ENCODE measurements at regions of chr17 and their contacts with region 1.

Region 1: DNA sequence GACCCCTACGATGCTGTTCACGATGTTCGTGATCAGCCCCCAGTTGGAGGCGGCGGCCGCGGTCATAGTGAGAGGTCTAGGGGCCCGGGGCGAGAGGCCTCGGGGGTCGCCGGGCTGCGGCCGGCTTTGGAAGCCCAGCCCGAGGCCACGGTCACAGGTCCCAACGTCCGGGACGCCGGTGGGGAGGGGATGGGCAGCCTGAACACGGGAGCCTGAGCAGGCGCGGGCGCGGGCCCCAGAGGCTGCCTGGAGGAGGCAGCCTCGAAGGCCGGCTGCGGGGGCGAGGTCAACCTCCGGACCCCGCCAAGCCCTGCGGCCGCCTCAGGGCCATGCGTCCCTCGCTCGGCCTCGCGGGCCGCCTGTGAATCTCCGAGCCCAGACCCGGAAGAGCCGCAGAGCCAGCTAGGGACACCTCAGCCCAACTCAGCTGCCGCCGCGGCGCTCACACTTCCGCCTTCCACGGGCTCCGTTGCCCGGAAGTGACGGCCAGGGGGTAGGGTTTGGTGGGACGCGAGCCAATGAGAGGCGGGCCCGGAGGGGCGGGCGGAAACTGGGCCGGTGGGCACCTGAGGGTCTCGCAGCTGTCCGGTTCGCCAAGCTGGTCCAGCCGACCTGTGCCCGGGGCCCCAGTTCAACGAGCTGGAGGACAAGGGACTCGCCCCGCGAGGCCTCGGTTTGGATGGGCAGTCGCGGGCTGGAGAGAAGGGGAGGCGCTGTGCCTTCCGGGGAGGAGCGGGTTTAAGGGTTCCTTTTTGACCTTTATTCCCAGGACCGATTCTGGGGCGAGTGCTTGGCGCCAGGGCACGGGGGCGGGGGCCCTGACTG is at the start of gene SLC38A10:
- DNase-seq: peak; percentile 87 to 93 (median 89)
- H3K4me3 ChIP-seq: peak within 1 kb of the TSS; percentile 68 to 75
- H3K4me3 Mint-ChIP-seq: peak within 1 kb of the TSS; percentile 93 to 98 (median 96)
- H3K27ac ChIP-seq: peak within 1 kb of the TSS; percentile 97
- H3K27ac Mint-ChIP-seq: peak within 1 kb of the TSS; percentile 96 to 99 (median 98)
- H3K4me1 ChIP-seq: peaks cover 45% of the 10 kb centered on the region
- H3K4me1 Mint-ChIP-seq: peaks cover 17 to 56% (median 39%) of the 10 kb centered on the region in 4 donors
- H3K27me3 ChIP-seq: no peaks in the 10 kb centered on the region
- H3K27me3 Mint-ChIP-seq: no peaks in the 10 kb centered on the region
- total RNA-seq, gene SLC38A10: 112 to 113 TPM

Region 2: DNA sequence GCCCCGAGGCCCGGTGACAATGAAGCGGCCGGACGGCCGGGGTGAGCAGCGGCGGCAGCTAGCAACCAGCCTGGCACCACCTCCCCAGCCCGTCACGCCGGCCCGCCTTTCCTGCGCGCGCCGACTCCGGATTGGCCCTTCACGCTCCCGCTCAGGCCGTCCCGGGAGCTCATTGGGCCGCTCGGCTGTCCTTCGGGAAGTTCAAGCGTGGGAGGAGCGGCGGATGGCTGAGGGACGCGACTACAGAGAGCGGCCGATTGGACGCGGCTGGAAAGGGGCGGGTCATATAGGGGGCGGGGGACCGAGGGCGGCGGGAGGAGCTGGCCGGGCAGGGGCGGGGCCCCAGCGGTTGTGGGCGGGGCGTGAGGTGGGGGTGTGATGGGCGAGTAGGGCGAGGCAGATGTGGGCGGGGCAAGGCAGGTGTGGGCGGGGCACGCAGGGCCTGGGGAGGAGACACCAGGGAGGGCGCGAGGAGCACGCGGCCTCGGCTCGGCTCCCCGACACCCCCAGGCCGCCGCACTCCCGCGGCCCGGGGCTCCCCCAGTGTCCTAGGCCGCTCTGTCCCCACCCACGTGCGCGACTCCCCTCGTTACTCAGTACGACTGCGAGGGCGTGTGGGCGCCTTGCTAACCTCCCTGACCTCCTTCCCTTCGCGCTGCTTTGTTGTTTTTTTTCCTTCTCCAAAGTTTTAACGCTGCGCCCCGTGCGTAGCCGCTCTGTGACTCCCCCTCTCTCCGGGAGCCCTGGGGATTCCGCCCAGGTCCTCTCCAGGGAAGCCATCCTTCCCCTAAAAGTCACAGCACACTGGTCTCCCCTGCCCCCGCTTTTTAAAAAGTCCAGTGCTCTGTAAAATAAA is 71.9 kb before region 1 on chr17 and contains the start of gene CEP131:
- CTCF ChIA-PET with region 1: no interaction called
- POLR2A ChIA-PET with region 1: interaction called, 5 read pairs
- intact Hi-C with region 1: loop called (anchors 1 kb)
- DNase-seq: peak; percentile 98 to 99 (median 98)
- H3K4me3 ChIP-seq: peak within 1 kb of the TSS in 1 of 2 donors; percentile 50
- H3K4me3 Mint-ChIP-seq: peak within 1 kb of the TSS; percentile 73 to 85 (median 79)
- H3K27ac ChIP-seq: peak within 1 kb of the TSS; percentile 54
- H3K27ac Mint-ChIP-seq: peak within 1 kb of the TSS in 5 of 7 donors; percentile 22 to 81 (median 75)
- H3K4me1 ChIP-seq: peaks cover 18% of the 10 kb centered on the region
- H3K4me1 Mint-ChIP-seq: peaks cover 0 to 22% (median 17%) of the 10 kb centered on the region in 4 donors
- H3K27me3 ChIP-seq: no peaks in the 10 kb centered on the region
- H3K27me3 Mint-ChIP-seq: no peaks in the 10 kb centered on the region
- total RNA-seq, gene CEP131: 9.6 to 10.5 TPM

Region 3: GRCh38 chr17:81238817-81239600 is 56.1 kb before region 1 on chr17 and contains the starts of genes NDUFAF8 and TEPSIN:
- CTCF ChIA-PET with region 1: interaction called, 3 read pairs
- POLR2A ChIA-PET with region 1: interaction called, 17 read pairs
- intact Hi-C with region 1: loop called (anchors 5 kb)
- DNase-seq: peak; percentile 95 to 99 (median 98)
- H3K4me3 ChIP-seq: peak within 1 kb of the TSS; percentile 76 to 89
- H3K4me3 Mint-ChIP-seq: peak within 1 kb of the TSS; percentile 91 to 96 (median 94)
- H3K27ac ChIP-seq: peak within 1 kb of the TSS; percentile 80
- H3K27ac Mint-ChIP-seq: peak within 1 kb of the TSS; percentile 86 to 95 (median 92)
- H3K4me1 ChIP-seq: peaks cover 37% of the 10 kb centered on the region
- H3K4me1 Mint-ChIP-seq: peaks cover 13 to 42% (median 34%) of the 10 kb centered on the region in 4 donors
- H3K27me3 ChIP-seq: no peaks in the 10 kb centered on the region
- H3K27me3 Mint-ChIP-seq: no peaks in the 10 kb centered on the region
- total RNA-seq, gene NDUFAF8: 40.1 to 45.1 TPM
- total RNA-seq, gene TEPSIN: 111 to 126 TPM

Region 4: GRCh38 chr17:81253358-81254131 is 41.5 kb before region 1 on chr17:
- CTCF ChIA-PET with region 1: interaction called, 9 read pairs
- POLR2A ChIA-PET with region 1: interaction called, 3 read pairs
- intact Hi-C with region 1: loop called (anchors 1 kb)
- DNase-seq: peak; percentile 55 to 64 (median 62)
- H3K4me3 ChIP-seq: no peak overlapping the region
- H3K4me3 Mint-ChIP-seq: peak overlapping the region in 1 of 8 donors; percentile 29
- H3K27ac ChIP-seq: no peak overlapping the region
- H3K27ac Mint-ChIP-seq: peak overlapping the region; percentile 12 to 85 (median 28)
- H3K4me1 ChIP-seq: no peaks in the 10 kb centered on the region
- H3K4me1 Mint-ChIP-seq: peaks cover 7 to 11% (median 8%) of the 10 kb centered on the region in 4 donors
- H3K27me3 ChIP-seq: no peaks in the 10 kb centered on the region
- H3K27me3 Mint-ChIP-seq: no peaks in the 10 kb centered on the region

Region 5: GRCh38 chr17:81484195-81484979 is 189.3 kb after region 1 on chr17:
- CTCF ChIA-PET with region 1: interaction called, 17 read pairs
- POLR2A ChIA-PET with region 1: interaction called, 11 read pairs
- intact Hi-C with region 1: loop called (anchors 1 kb)
- DNase-seq: peak; percentile 76 to 90 (median 85)
- H3K4me3 ChIP-seq: peak overlapping the region in 1 of 2 donors; percentile 48
- H3K4me3 Mint-ChIP-seq: peak overlapping the region in 1 of 8 donors; percentile 45
- H3K27ac ChIP-seq: no peak overlapping the region
- H3K27ac Mint-ChIP-seq: no peak overlapping the region
- H3K4me1 ChIP-seq: peaks cover 30% of the 10 kb centered on the region
- H3K4me1 Mint-ChIP-seq: peaks cover 2 to 24% (median 7%) of the 10 kb centered on the region in 4 donors
- H3K27me3 ChIP-seq: peaks cover 22% of the 10 kb centered on the region
- H3K27me3 Mint-ChIP-seq: peaks cover 11 to 20% of the 10 kb centered on the region in 2 donors

Region 6: DNA sequence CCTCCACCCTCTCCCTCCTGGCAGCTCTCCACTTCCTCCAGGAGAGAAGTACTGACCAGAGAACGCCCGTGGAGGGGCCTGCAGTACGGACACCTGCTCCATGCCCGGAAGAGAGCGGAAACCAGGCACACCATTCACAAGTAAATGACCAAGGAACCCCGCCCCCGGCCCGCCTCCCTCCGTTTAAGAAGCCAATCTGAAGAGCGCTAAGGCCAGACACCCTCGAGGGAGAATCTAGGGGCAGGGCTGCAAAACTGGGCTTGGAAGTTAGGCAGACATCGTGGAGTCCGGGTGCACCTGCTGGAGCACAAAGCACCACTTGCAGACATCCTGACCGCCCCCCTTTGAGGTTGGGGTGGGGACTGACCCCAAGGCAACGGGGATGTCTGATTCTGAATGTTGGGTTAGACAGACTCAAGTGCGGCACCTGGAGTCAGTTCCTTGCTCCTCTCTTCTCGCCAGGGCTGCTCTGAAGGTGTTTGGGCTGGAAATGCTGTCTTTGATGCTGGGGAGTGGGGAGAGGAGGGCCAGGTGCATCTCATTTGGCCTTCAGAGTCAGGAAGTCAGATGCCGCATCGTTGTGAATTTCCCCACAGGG is 258.0 kb after region 1 on chr17:
- CTCF ChIA-PET with region 1: no interaction called
- POLR2A ChIA-PET with region 1: interaction called, 9 read pairs
- intact Hi-C with region 1: loop called (anchors 5 kb)
- DNase-seq: peak; percentile 77 to 91 (median 77)
- H3K4me3 ChIP-seq: peak overlapping the region; percentile 81
- H3K4me3 Mint-ChIP-seq: peak overlapping the region; percentile 89 to 93 (median 90)
- H3K27ac ChIP-seq: peak overlapping the region; percentile 64
- H3K27ac Mint-ChIP-seq: peak overlapping the region; percentile 91 to 97 (median 94)
- H3K4me1 ChIP-seq: peaks cover 24% of the 10 kb centered on the region
- H3K4me1 Mint-ChIP-seq: peaks cover 17 to 43% (median 28%) of the 10 kb centered on the region in 4 donors
- H3K27me3 ChIP-seq: no peaks in the 10 kb centered on the region
- H3K27me3 Mint-ChIP-seq: no peaks in the 10 kb centered on the region

Measured in CD4-positive, alpha-beta memory T cell (primary cell).